ENCODE measurements at regions of chr1 and their contacts with region 1.

Region 1: DNA sequence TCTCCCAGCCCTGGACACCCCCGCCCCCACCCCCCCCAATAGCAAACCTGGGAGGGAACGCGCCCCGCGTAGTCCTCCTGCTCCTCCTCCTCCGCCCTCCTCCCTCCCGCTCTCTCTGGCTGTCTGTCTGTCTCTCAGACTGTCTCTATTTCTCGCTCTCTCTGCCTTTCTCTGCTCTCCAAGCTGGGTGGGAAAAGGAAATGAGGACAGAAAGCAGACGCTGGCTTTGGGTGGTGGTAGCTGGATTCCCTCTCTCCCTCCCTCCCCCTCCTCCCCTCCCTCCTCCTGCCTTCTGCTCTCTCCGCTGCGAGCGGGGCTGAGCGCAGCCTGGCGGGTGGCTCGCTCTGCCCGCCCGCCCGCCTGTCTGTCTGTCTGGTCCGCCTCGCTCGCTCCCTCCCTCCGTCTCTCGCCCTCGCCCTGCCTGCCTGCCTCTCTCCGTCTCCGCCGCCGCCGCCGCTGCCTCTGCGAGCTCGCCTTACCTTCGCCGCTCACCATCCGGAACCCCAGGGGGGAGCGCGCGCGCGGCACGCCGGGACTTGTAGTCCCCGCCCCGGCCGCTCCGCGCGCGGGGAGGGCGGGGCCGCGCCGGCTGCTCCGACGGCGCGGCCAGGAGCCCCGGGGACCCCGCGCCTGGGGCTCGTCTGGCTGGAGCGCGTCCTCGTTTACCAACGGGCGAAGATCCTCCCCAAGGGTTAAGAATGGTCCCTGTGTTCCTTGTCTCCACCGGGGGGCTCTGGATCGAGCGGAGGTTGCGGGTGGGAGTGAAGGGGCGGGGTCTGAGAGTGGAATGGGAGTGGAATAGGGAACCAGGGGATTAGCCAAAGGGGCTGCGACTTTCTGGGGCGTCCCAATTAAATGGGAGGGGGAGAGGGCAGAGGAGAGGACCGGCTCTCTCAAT is at the start of gene AHDC1:
- DNase-seq: peak; percentile 89 to 93
- ATAC-seq: peak; percentile 64 to 89 (median 77)
- H3K4me3 ChIP-seq: peak within 1 kb of the TSS; percentile 87
- H3K4me3 Mint-ChIP-seq: peak within 1 kb of the TSS; percentile 94
- H3K27ac ChIP-seq: peak within 1 kb of the TSS; percentile 71
- H3K27ac Mint-ChIP-seq: peak within 1 kb of the TSS; percentile 81 to 91
- H3K4me1 ChIP-seq: peaks cover 77% of the 10 kb centered on the region
- H3K4me1 Mint-ChIP-seq: peaks cover 27 to 49% of the 10 kb centered on the region in 2 donors
- H3K27me3 ChIP-seq: no peaks in the 10 kb centered on the region
- H3K27me3 Mint-ChIP-seq: no peaks in the 10 kb centered on the region
- CTCF ChIP-seq: no peak
- total RNA-seq, gene AHDC1: 39.6 to 67.0 (median 47.0) TPM

Region 2: DNA sequence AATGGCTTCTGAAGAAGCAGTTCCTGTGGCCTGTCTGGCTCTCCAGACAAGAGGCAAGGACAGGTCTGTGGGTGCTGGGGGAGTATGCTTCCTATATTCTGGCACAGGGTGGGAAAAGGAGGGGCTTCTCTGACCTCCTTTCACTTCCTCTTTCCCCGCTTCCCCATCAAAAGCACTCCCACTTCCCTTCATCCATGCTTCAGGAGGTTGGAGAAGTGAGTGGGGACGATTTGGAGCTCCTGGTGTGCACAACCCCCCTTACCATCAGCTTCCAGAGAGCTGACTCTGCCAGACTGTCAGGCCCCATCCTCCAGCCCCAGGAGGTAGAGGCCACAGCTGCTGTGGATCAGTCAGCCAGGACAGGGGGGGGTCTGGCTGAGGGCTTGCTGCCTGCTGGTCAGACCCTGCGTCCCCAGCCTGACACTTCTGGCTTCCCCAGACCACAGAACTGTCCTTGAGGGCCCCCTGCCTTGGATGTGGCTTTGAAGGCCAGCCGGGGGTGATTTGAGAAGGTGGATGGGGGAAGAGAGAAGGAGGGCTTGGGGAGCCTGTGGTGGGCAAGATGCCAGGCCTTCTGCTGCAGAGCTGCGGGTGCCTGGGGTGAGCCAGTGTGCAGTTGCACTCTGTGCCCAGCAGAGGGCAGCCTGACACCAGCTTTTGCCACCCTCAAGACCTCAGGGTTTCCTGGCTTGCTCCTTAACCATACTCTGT is 303.4 kb before region 1 on chr1:
- intact Hi-C with region 1: loop called (anchors 2 kb)
- DNase-seq: peak; percentile 77 to 94
- ATAC-seq: peak; percentile 91 to 98 (median 91)
- H3K4me3 ChIP-seq: no peak overlapping the region
- H3K4me3 Mint-ChIP-seq: no peak overlapping the region
- H3K27ac ChIP-seq: no peak overlapping the region
- H3K27ac Mint-ChIP-seq: no peak overlapping the region
- H3K4me1 ChIP-seq: peaks cover 18% of the 10 kb centered on the region
- H3K4me1 Mint-ChIP-seq: peaks cover 6 to 7% of the 10 kb centered on the region in 2 donors
- H3K27me3 ChIP-seq: no peaks in the 10 kb centered on the region
- H3K27me3 Mint-ChIP-seq: no peaks in the 10 kb centered on the region
- CTCF ChIP-seq: peak; percentile 91

Region 3: GRCh38 chr1:27402349-27402754 is 201.6 kb before region 1 on chr1:
- intact Hi-C with region 1: loop called (anchors 5 kb)
- DNase-seq: peak in 1 of 2 donors; percentile 39
- ATAC-seq: no peak
- H3K4me3 ChIP-seq: no peak overlapping the region
- H3K4me3 Mint-ChIP-seq: no peak overlapping the region
- H3K27ac ChIP-seq: peak overlapping the region; percentile 74
- H3K27ac Mint-ChIP-seq: peak overlapping the region; percentile 86 to 94
- H3K4me1 ChIP-seq: peaks cover 41% of the 10 kb centered on the region
- H3K4me1 Mint-ChIP-seq: peaks cover 33 to 41% of the 10 kb centered on the region in 2 donors
- H3K27me3 ChIP-seq: no peaks in the 10 kb centered on the region
- H3K27me3 Mint-ChIP-seq: no peaks in the 10 kb centered on the region
- CTCF ChIP-seq: no peak

Region 4: GRCh38 chr1:27416387-27417111 is 187.4 kb before region 1 on chr1:
- intact Hi-C with region 1: loop called (anchors 5 kb)
- DNase-seq: peak in 1 of 2 donors; percentile 82
- ATAC-seq: peak; percentile 77 to 85 (median 81)
- H3K4me3 ChIP-seq: no peak overlapping the region
- H3K4me3 Mint-ChIP-seq: no peak overlapping the region
- H3K27ac ChIP-seq: peak overlapping the region; percentile 14
- H3K27ac Mint-ChIP-seq: peak overlapping the region; percentile 69 to 87
- H3K4me1 ChIP-seq: peaks cover 27% of the 10 kb centered on the region
- H3K4me1 Mint-ChIP-seq: peaks cover 34 to 36% of the 10 kb centered on the region in 2 donors
- H3K27me3 ChIP-seq: no peaks in the 10 kb centered on the region
- H3K27me3 Mint-ChIP-seq: no peaks in the 10 kb centered on the region
- CTCF ChIP-seq: peak; percentile 64

Region 5: GRCh38 chr1:27489910-27490741 is 113.8 kb before region 1 on chr1 and contains the start of gene WASF2:
- intact Hi-C with region 1: loop called (anchors 5 kb)
- DNase-seq: peak; percentile 95 to 98
- ATAC-seq: peak; percentile 92 to 99 (median 94)
- H3K4me3 ChIP-seq: peak within 1 kb of the TSS; percentile 97
- H3K4me3 Mint-ChIP-seq: peak within 1 kb of the TSS; percentile 99
- H3K27ac ChIP-seq: peak within 1 kb of the TSS; percentile 89
- H3K27ac Mint-ChIP-seq: peak within 1 kb of the TSS; percentile 98 to 99
- H3K4me1 ChIP-seq: peaks cover 31% of the 10 kb centered on the region
- H3K4me1 Mint-ChIP-seq: peaks cover 27 to 29% of the 10 kb centered on the region in 2 donors
- H3K27me3 ChIP-seq: no peaks in the 10 kb centered on the region
- H3K27me3 Mint-ChIP-seq: no peaks in the 10 kb centered on the region
- CTCF ChIP-seq: no peak
- total RNA-seq, gene WASF2: 137 to 153 (median 143) TPM

Region 6: DNA sequence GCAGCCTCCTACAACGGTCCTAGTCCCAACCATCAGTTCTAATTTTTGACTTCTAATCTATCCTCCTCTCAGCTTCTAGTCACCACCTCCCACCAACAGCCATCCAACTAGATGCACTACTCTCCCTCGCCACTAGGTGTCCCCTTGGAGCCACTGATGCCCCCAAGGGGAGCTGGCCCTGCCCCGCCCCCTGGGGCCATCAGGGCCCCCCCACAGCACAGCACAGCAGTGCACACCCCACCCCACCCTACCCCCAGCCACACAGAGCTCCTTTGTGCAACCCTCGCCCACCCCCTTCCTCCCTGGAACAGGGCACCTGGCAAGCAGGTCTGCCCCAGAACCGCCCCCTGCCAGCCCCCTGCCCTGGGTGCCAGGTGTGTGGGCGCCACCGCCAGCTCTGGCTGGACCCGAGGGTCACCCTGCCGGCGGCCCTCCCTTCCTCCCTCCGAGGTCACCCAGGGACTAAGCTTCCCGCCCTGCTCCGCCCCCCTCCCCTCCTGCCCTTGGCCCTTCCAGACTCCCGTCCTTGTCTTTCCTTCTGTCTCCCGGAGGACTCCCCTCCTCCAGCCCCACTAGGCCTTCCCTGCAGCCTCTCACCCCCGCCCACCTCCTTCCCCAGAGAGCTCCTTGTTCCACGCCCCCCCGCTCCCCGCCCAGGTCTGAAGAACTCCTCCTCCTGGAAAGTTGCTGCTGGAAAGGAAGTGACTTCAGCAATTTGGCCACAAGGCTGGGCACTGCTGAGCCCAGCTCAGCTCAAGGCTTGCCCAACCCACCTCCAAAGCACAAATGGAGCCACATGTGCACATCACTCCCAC is 46.9 kb before region 1 on chr1:
- intact Hi-C with region 1: loop called (anchors 1 kb)
- DNase-seq: peak; percentile 73 to 87
- ATAC-seq: peak; percentile 85 to 92 (median 85)
- H3K4me3 ChIP-seq: no peak overlapping the region
- H3K4me3 Mint-ChIP-seq: peak overlapping the region; percentile 63
- H3K27ac ChIP-seq: no peak overlapping the region
- H3K27ac Mint-ChIP-seq: peak overlapping the region; percentile 77 to 83
- H3K4me1 ChIP-seq: peaks cover 43% of the 10 kb centered on the region
- H3K4me1 Mint-ChIP-seq: peaks cover 42 to 57% of the 10 kb centered on the region in 2 donors
- H3K27me3 ChIP-seq: no peaks in the 10 kb centered on the region
- H3K27me3 Mint-ChIP-seq: no peaks in the 10 kb centered on the region
- CTCF ChIP-seq: peak; percentile 95

Region 7: GRCh38 chr1:27618341-27619082 is 14.6 kb after region 1 on chr1:
- intact Hi-C with region 1: loop called (anchors 1 kb)
- DNase-seq: peak in 1 of 2 donors; percentile 83
- ATAC-seq: peak; percentile 77 to 92 (median 89)
- H3K4me3 ChIP-seq: no peak overlapping the region
- H3K4me3 Mint-ChIP-seq: peak overlapping the region; percentile 74
- H3K27ac ChIP-seq: peak overlapping the region; percentile 86
- H3K27ac Mint-ChIP-seq: peak overlapping the region in 1 of 2 donors; percentile 82
- H3K4me1 ChIP-seq: peaks cover 94% of the 10 kb centered on the region
- H3K4me1 Mint-ChIP-seq: peaks cover 60 to 75% of the 10 kb centered on the region in 2 donors
- H3K27me3 ChIP-seq: no peaks in the 10 kb centered on the region
- H3K27me3 Mint-ChIP-seq: no peaks in the 10 kb centered on the region
- CTCF ChIP-seq: no peak